H1 (cell line): ENCODE measurements at regions of chr4 and their contacts with region 1.

Region 1: DNA sequence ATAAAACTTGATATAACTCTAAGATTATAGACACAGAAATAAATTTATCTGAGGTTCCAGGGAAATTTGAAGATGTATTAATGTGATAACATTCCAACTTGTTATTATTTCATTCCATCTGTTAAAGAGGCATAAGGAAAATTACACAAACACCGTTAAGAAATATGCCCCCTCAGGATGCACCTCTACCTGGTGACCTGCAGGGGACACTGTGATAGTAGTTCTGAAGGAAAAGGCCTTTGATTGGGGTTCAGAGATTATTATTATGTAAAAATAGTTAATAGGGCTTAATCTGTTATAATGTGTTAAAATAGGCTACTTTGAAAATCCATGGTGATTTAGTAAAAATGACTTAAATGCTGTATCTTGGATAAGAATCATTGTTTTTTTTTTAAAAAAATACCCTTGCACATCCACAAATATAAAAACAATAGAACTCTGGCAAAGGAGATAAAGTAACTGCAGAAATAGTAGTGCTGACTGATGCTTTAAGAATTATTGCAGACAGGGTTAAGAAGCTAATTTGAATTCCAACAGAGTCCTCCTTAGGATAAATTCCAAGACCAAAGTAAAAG is 6.1 kb upstream of the ABRAXAS1 start:
- DNase-seq: no peak
- H3K4me3 ChIP-seq: no peak overlapping the region
- H3K27ac ChIP-seq: no peak overlapping the region
- H3K4me1 ChIP-seq: no peaks in the 10 kb centered on the region; a peak in 1 of 7 replicates
- H3K27me3 ChIP-seq: no peaks in the 10 kb centered on the region
- CTCF ChIP-seq: peak in 2 of 3 experiments; percentile 50 to 74; a peak in 2 of 4 replicates
- EP300 ChIP-seq: no peak
- POLR2A ChIP-seq: no peak
- RAD21 ChIP-seq: peak; percentile 48 to 52

Region 2: DNA sequence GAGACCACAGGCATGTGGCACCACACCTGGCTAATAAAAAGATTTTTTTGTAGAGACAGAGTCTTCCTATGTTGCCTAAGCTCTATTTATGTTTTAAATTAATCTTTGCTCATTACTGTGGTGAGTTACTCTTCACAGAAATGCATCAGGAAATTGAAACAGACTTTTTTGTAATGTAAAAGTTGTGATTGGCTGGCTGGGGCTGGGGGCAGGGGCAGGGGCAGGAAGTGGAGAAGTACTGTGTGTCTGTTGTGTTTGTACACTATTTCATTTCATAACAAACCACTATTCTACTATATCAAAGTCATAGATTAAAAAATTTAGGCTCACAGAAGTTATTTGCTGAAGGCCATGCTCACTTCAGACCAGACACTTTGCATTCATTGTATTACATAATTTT is 13.0 kb after region 1 on chr4:
- CTCF ChIA-PET with region 1: interaction called, 34 read pairs
- POLR2A ChIA-PET with region 1: no interaction called
- DNase-seq: no peak
- H3K4me3 ChIP-seq: no peak overlapping the region
- H3K27ac ChIP-seq: no peak overlapping the region
- H3K4me1 ChIP-seq: no peaks in the 10 kb centered on the region
- H3K27me3 ChIP-seq: no peaks in the 10 kb centered on the region
- CTCF ChIP-seq: no peak
- EP300 ChIP-seq: no peak
- POLR2A ChIP-seq: no peak
- RAD21 ChIP-seq: no peak